Psoas muscle (tissue), 8 donors: ENCODE measurements at regions of chr9 and their contacts with region 1.

Region 1: DNA sequence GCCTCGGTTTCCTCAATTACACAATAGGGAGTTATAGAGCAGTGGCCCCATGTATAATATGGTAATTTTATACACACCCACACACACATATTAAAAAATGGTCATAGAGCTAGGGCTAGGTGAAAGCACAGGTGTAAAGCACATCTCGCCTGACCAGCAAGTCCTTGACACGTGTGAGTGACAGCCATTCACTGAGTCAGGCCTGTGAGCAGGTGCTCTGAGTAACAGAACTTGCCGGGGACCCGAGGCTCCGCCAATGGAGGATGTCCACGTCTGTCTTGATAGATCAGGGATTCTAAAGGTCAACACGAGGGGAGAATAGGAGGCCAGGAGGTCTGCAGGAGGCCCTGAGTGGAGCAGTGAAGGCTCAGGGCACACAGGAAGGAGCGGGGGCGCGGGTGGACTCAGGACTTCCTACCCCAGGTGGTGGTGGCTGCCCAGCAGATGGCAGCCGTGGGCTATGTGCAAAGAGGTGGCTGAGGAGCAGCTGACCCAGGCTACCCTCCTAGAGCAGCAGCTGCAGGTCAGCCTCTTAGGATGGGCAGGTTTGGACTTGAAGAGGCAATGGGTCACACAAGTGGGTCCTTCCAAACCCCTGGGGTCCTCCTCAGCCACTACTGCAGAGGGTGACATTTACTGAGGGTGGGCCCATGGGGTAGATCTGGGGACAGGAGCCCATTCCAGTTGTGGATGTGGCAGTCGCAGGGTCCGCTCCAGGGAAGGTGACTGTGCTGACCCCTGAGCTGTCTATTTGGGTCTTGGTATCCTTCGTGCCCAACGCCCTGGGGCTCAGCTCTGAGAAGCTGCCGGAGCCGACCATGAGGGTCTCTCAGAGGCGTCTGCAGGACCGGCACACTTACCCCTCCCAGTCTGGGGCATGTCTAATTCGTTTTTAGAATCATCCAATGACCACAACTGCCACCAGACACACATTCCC is 45.9 kb downstream of the PRRT1B start:
- DNase-seq: peak; percentile 81 to 92
- ATAC-seq: peak; percentile 86 to 93 (median 86)
- H3K4me3 ChIP-seq: no peak overlapping the region
- H3K27ac ChIP-seq: peak overlapping the region; percentile 76
- H3K4me1 ChIP-seq: peaks cover 24% of the 10 kb centered on the region
- H3K27me3 ChIP-seq: no peaks in the 10 kb centered on the region
- CTCF ChIP-seq: peak; percentile 91

Region 2: GRCh38 chr9:131167146-131167692 is 424.0 kb before region 1 on chr9:
- intact Hi-C with region 1: no loop called
- DNase-seq: no peak
- ATAC-seq: peak; percentile 49 to 95 (median 78)
- H3K4me3 ChIP-seq: no peak overlapping the region
- H3K27ac ChIP-seq: no peak overlapping the region
- H3K4me1 ChIP-seq: no peaks in the 10 kb centered on the region
- H3K27me3 ChIP-seq: no peaks in the 10 kb centered on the region
- CTCF ChIP-seq: no peak

Region 3: GRCh38 chr9:132250324-132251262 is 659.4 kb after region 1 on chr9:
- intact Hi-C with region 1: loop called in 1 of 2 experiments (anchors 10 kb)
- DNase-seq: peak in 1 of 2 donors; percentile 47
- ATAC-seq: no peak
- H3K4me3 ChIP-seq: no peak overlapping the region
- H3K27ac ChIP-seq: no peak overlapping the region
- H3K4me1 ChIP-seq: no peaks in the 10 kb centered on the region
- H3K27me3 ChIP-seq: peaks cover 0 to 33% (median 9%) of the 10 kb centered on the region in 3 donors
- CTCF ChIP-seq: no peak

Region 4: GRCh38 chr9:133449760-133450159 is 1858.6 kb after region 1 on chr9:
- intact Hi-C with region 1: no loop called
- DNase-seq: no peak
- ATAC-seq: no peak
- H3K4me3 ChIP-seq: no peak overlapping the region
- H3K27ac ChIP-seq: no peak overlapping the region
- H3K4me1 ChIP-seq: no peaks in the 10 kb centered on the region
- H3K27me3 ChIP-seq: no peaks in the 10 kb centered on the region
- CTCF ChIP-seq: no peak